ENCODE measurements at regions of chr6 and their contacts with region 1.

Region 1: DNA sequence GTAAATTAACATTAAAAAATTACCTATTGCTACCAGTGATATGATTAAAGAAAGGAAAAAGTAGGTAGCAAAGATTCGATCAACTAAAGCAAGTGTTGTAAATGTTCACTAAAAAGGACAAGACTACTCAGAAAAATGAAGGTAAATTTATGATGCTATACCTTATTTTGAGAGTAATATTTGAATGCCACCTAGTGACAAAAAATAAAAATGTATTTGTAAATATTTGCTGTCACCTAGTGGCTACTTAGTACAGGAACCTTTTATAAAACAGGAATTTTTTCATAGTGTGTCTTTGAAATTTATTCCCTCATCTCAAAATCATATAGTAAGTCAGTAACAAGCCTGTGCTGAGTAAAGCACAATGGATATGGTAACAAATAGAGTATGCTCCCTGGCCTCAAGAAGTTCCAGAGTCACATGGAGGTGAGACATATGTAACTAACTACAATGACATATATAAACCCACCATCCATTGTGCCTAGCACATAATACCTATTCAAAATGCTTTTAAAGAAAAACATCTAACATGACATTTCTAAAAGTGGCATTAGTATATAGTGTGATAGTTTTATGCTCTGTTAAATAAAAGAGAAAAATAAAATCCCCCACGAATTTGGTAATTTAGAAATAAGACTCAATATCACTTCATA is 193.1 kb upstream of the SIM1 start:
- DNase-seq: peak; percentile 48
- ATAC-seq: peak; percentile 34; the same call in 1 of the 2 replicates
- H3K4me3 ChIP-seq: no peak overlapping the region
- H3K27ac ChIP-seq: no peak overlapping the region
- H3K4me1 ChIP-seq: no peaks in the 10 kb centered on the region
- H3K27me3 ChIP-seq: no peaks in the 10 kb centered on the region
- CTCF ChIP-seq: peak; percentile 68; the same call in 1 of the 2 replicates

Region 2: DNA sequence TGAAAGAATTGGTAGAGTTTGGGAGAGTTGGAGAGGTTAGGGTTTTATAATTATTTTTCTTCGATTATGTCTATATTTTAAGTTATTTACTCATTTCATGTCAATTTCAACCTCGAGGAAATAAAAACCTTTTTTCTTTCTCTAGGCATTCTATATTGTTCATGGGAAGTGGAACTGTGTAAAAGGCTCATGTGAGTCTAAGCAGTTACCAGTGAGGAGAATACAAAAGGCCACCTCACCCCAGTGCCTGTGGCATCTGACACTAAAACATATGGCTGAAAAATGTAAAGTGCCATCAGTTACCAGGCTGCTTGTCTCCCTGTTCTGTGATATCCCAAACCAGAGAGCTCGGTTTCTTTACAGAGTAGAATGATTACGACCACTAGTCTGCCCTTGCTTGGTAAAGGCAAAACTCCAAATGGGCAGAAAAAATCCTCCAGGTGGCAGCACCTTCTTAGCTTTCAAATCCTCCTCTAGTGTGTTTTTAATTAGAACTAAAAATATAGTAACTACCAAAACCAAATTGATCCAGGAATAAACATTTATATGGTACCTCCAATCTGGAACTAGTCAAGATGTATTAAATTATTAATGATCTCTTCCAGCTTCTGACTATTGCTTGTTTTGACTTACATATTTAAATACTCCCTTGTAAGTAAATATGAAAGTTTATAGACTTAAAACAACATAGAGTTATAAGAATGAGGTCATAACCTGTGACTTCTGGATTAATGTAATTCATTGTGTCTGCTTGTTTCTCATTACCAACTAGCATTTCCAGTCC is 541.2 kb before region 1 on chr6:
- CTCF ChIA-PET with region 1: interaction called, 3 read pairs
- POLR2A ChIA-PET with region 1: no interaction called
- in situ Hi-C with region 1: no loop called
- intact Hi-C with region 1: loop called (anchors 5 kb)
- DNase-seq: peak; percentile 56
- ATAC-seq: peak; percentile 87
- H3K4me3 ChIP-seq: no peak overlapping the region
- H3K27ac ChIP-seq: no peak overlapping the region
- H3K4me1 ChIP-seq: no peaks in the 10 kb centered on the region; the same call in 1 of the 2 replicates
- H3K27me3 ChIP-seq: no peaks in the 10 kb centered on the region
- CTCF ChIP-seq: peak; percentile 78

Region 3: DNA sequence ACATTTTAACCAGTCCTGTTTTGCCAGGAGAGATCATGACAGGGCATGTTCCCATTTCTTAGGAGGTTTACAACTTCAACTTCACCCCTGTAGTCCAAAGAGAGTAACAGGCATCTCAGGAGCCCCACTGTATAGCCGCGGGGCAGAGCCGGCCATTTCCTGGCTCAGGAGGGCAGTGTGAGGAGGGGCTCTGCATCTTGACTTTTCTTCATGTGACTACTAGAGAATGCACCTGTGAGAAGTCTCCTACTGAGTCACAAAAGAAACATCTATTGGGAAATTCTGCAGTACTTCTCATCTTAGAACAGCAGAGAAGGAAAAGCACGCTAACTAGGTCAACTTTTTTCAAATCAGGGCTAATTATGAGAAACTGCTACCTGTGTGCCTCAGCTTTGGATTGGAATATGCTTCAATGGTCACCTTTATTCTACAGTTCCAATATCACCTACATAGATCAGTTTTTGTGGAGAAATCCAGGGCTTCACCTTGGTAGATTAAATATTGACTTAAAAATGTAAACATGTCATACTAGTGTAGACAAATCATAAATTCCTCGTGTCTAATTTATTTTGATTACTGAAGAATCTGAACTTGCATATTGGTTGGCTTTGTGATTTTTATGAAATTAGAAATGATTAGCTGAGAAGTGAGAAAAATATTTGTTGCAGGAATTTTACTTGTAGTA is 164.4 kb before region 1 on chr6:
- CTCF ChIA-PET with region 1: no interaction called
- POLR2A ChIA-PET with region 1: no interaction called
- in situ Hi-C with region 1: no loop called
- intact Hi-C with region 1: loop called (anchors 10 kb)
- DNase-seq: no peak
- ATAC-seq: no peak
- H3K4me3 ChIP-seq: no peak overlapping the region
- H3K27ac ChIP-seq: no peak overlapping the region
- H3K4me1 ChIP-seq: no peaks in the 10 kb centered on the region
- H3K27me3 ChIP-seq: no peaks in the 10 kb centered on the region
- CTCF ChIP-seq: no peak

Region 4: DNA sequence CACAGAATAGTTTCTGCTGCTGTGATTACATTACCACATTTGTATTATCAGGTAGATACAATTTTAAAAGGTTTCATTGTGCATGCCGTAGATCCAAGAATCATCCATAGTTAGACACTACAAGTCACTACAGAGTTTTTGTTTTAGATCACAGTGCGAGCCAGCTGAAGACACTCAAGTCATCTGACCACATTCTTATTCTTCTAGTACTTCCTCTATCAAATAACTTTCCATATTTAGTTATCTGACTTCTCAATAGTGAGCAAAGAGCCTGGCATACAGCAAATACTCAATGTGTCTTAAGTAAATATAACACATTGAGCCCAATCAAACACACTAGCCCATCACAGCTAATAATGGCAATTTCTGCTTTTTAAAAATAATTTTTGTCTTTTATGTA is 27.9 kb after region 1 on chr6:
- CTCF ChIA-PET with region 1: no interaction called
- POLR2A ChIA-PET with region 1: no interaction called
- in situ Hi-C with region 1: no loop called
- intact Hi-C with region 1: no loop called
- DNase-seq: no peak
- ATAC-seq: no peak
- H3K4me3 ChIP-seq: no peak overlapping the region
- H3K27ac ChIP-seq: no peak overlapping the region
- H3K4me1 ChIP-seq: no peaks in the 10 kb centered on the region
- H3K27me3 ChIP-seq: no peaks in the 10 kb centered on the region
- CTCF ChIP-seq: no peak